B cell (primary cell): ENCODE measurements at regions of chr11 and their contacts with region 1.

Region 1: GRCh38 chr11:74388678-74389327 is 9.4 kb downstream of the PGM2L1 start:
- DNase-seq: peak; percentile 75
- ATAC-seq: peak; percentile 76
- H3K4me3 ChIP-seq: no peak overlapping the region
- H3K4me3 Mint-ChIP-seq: no peak overlapping the region
- H3K27ac ChIP-seq: no peak overlapping the region
- H3K27ac Mint-ChIP-seq: no peak overlapping the region
- H3K4me1 ChIP-seq: no peaks in the 10 kb centered on the region
- H3K4me1 Mint-ChIP-seq: peaks cover 1% of the 10 kb centered on the region
- H3K27me3 ChIP-seq: no peaks in the 10 kb centered on the region
- H3K27me3 Mint-ChIP-seq: no peaks in the 10 kb centered on the region
- CTCF ChIP-seq: peak; percentile 90

Region 2: GRCh38 chr11:74418509-74418895 is 29.7 kb after region 1 on chr11:
- CTCF ChIA-PET with region 1: interaction called, 12 read pairs
- POLR2A ChIA-PET with region 1: no interaction called
- intact Hi-C with region 1: no loop called
- DNase-seq: no peak
- ATAC-seq: no peak
- H3K4me3 ChIP-seq: no peak overlapping the region
- H3K4me3 Mint-ChIP-seq: no peak overlapping the region
- H3K27ac ChIP-seq: no peak overlapping the region
- H3K27ac Mint-ChIP-seq: no peak overlapping the region
- H3K4me1 ChIP-seq: no peaks in the 10 kb centered on the region
- H3K4me1 Mint-ChIP-seq: no peaks in the 10 kb centered on the region
- H3K27me3 ChIP-seq: peaks cover 0 to 3% (median 0%) of the 10 kb centered on the region in 4 experiments
- H3K27me3 Mint-ChIP-seq: peaks cover 12% of the 10 kb centered on the region
- CTCF ChIP-seq: no peak

Region 3: DNA sequence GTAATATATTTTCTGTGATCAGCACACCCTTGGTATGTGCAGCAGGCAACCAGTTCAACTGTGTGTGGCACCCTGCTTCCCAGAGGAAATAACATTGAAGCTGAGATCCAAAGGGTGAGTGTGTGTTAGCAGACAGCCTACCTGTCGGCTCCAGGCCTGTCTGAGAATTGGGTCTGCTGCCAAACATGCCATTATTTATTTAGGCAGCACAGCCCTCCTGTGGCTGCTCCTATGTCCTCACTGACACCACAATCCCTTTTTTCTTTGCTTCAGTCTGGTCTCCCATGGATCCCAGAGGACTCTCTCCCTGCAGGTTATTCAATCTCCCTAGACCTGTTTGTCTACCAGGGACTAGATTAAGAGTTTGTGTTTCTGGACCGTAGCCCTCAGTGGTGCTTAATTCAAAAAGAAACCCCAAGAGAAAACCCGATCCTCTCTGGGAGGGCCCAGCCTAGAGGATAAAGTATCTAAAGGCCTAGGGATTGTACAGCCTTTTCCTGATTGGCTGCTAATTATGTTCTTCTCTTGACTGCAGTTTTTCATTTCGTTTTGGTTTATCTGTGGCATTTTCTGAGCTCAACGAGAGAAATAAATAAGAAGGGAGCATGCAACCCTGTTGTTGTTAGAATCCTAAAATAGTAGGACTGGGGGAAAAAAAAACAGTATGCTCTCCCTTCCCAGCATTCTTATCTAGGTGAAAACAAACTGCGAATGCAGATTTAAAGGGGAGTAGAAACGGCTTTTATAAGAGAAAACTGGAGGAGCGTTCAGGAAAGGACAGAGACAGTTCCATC is 54.5 kb after region 1 on chr11:
- CTCF ChIA-PET with region 1: interaction called, 325 read pairs
- POLR2A ChIA-PET with region 1: no interaction called
- intact Hi-C with region 1: no loop called
- DNase-seq: no peak
- ATAC-seq: no peak
- H3K4me3 ChIP-seq: no peak overlapping the region
- H3K4me3 Mint-ChIP-seq: no peak overlapping the region
- H3K27ac ChIP-seq: no peak overlapping the region
- H3K27ac Mint-ChIP-seq: no peak overlapping the region
- H3K4me1 ChIP-seq: no peaks in the 10 kb centered on the region
- H3K4me1 Mint-ChIP-seq: no peaks in the 10 kb centered on the region
- H3K27me3 ChIP-seq: peaks cover 0 to 8% (median 1%) of the 10 kb centered on the region in 4 experiments
- H3K27me3 Mint-ChIP-seq: peaks cover 36% of the 10 kb centered on the region
- CTCF ChIP-seq: no peak

Region 4: GRCh38 chr11:74570266-74571061 is 181.7 kb after region 1 on chr11:
- CTCF ChIA-PET with region 1: interaction called, 14 read pairs
- POLR2A ChIA-PET with region 1: no interaction called
- intact Hi-C with region 1: loop called (anchors 2 kb)
- DNase-seq: peak; percentile 38
- ATAC-seq: no peak
- H3K4me3 ChIP-seq: no peak overlapping the region
- H3K4me3 Mint-ChIP-seq: no peak overlapping the region
- H3K27ac ChIP-seq: no peak overlapping the region
- H3K27ac Mint-ChIP-seq: no peak overlapping the region
- H3K4me1 ChIP-seq: no peaks in the 10 kb centered on the region
- H3K4me1 Mint-ChIP-seq: no peaks in the 10 kb centered on the region
- H3K27me3 ChIP-seq: no peaks in the 10 kb centered on the region
- H3K27me3 Mint-ChIP-seq: peaks cover 23% of the 10 kb centered on the region
- CTCF ChIP-seq: peak; percentile 45